PC-3 (cell line): ENCODE measurements at regions of chr9 and their contacts with region 1.

Region 1: GRCh38 chr9:77751341-77752091 is 103.4 kb upstream of the GNA14 start:
- DNase-seq: peak; percentile 75
- ATAC-seq: peak; percentile 82
- H3K4me3 ChIP-seq: no peak overlapping the region
- H3K27ac ChIP-seq: no peak overlapping the region
- H3K4me1 ChIP-seq: peaks cover 7% of the 10 kb centered on the region
- H3K27me3 ChIP-seq: no peaks in the 10 kb centered on the region
- CTCF ChIP-seq: peak; percentile 76

Region 2: GRCh38 chr9:77433675-77434445 is 317.7 kb before region 1 on chr9:
- CTCF ChIA-PET with region 1: interaction called, 11 read pairs
- POLR2A ChIA-PET with region 1: no interaction called
- intact Hi-C with region 1: loop called (anchors 1 kb)
- DNase-seq: peak; percentile 64
- ATAC-seq: peak; percentile 98
- H3K4me3 ChIP-seq: no peak overlapping the region
- H3K27ac ChIP-seq: no peak overlapping the region
- H3K4me1 ChIP-seq: no peaks in the 10 kb centered on the region
- H3K27me3 ChIP-seq: no peaks in the 10 kb centered on the region
- CTCF ChIP-seq: peak; percentile 94

Region 3: GRCh38 chr9:77521091-77521490 is 230.4 kb before region 1 on chr9:
- CTCF ChIA-PET with region 1: no interaction called
- POLR2A ChIA-PET with region 1: no interaction called
- intact Hi-C with region 1: loop called (anchors 2 kb)
- DNase-seq: no peak
- ATAC-seq: no peak
- H3K4me3 ChIP-seq: no peak overlapping the region
- H3K27ac ChIP-seq: no peak overlapping the region
- H3K4me1 ChIP-seq: peaks cover 23% of the 10 kb centered on the region
- H3K27me3 ChIP-seq: no peaks in the 10 kb centered on the region
- CTCF ChIP-seq: no peak

Region 4: DNA sequence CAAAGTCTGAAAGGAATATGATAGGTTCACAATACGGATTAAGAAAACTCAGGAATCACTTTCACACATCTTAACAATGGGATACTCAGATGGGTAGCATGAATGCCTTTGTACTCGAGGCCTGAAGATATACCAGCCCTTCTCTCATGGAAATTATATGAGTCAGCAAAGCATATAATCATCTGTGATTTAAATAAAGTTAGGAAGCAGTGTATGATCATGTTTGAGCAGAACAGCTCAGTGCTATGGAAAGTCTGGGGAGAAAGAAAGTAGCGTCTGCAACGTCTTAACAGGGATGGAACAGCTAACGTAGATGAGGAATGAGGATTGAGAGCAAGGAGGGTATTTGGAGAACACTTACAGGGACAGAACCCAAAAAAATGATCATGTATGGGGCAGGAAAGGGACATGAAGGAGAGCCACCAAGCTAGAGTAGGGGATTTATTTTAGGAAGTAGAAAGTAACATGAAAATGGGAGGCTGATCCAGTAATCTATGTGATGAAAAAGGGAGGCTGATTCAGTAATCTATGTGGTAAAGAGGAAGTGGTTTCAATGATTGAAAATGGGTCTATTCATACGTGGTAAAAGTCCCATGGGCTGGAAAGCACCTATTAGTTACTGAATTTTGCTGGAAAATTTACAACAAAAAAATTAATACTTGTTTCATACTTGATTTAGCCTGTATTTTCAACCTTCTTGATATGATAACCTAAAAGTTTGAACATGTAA is 189.3 kb before region 1 on chr9:
- CTCF ChIA-PET with region 1: no interaction called
- POLR2A ChIA-PET with region 1: no interaction called
- intact Hi-C with region 1: no loop called
- DNase-seq: no peak
- ATAC-seq: no peak
- H3K4me3 ChIP-seq: no peak overlapping the region
- H3K27ac ChIP-seq: no peak overlapping the region
- H3K4me1 ChIP-seq: no peaks in the 10 kb centered on the region
- H3K27me3 ChIP-seq: no peaks in the 10 kb centered on the region
- CTCF ChIP-seq: no peak

Region 5: GRCh38 chr9:77663754-77664153 is 87.8 kb before region 1 on chr9:
- CTCF ChIA-PET with region 1: interaction called, 4 read pairs
- POLR2A ChIA-PET with region 1: no interaction called
- intact Hi-C with region 1: loop called (anchors 2 kb)
- DNase-seq: peak; percentile 65
- ATAC-seq: peak; percentile 27; the same call in 1 of the 2 replicates
- H3K4me3 ChIP-seq: peak overlapping the region; percentile 21; the same call in 1 of the 2 replicates
- H3K27ac ChIP-seq: no peak overlapping the region
- H3K4me1 ChIP-seq: peaks cover 15% of the 10 kb centered on the region
- H3K27me3 ChIP-seq: no peaks in the 10 kb centered on the region
- CTCF ChIP-seq: no peak

Region 6: GRCh38 chr9:77707383-77708063 is 44.0 kb before region 1 on chr9:
- CTCF ChIA-PET with region 1: no interaction called
- POLR2A ChIA-PET with region 1: no interaction called
- intact Hi-C with region 1: loop called (anchors 5 kb)
- DNase-seq: peak; percentile 91
- ATAC-seq: peak; percentile 97
- H3K4me3 ChIP-seq: no peak overlapping the region
- H3K27ac ChIP-seq: no peak overlapping the region
- H3K4me1 ChIP-seq: peaks cover 24% of the 10 kb centered on the region
- H3K27me3 ChIP-seq: no peaks in the 10 kb centered on the region
- CTCF ChIP-seq: no peak